ENCODE measurements at regions of chr18 and their contacts with region 1.

Region 1: GRCh38 chr18:59459369-59460079 is 100.5 kb upstream of the LMAN1 start:
- ATAC-seq: peak in 4 of 8 experiments; percentile 39 to 63 (median 44)
- H3K4me3 ChIP-seq: no peak overlapping the region
- H3K27ac ChIP-seq: no peak overlapping the region
- H3K4me1 ChIP-seq: peaks cover 12 to 17% of the 10 kb centered on the region in 2 donors

Region 2: GRCh38 chr18:58429442-58429841 is 1030.1 kb before region 1 on chr18:
- in situ Hi-C with region 1: no loop called
- ATAC-seq: peak in 1 of 8 experiments; percentile 12
- H3K4me3 ChIP-seq: no peak overlapping the region
- H3K27ac ChIP-seq: no peak overlapping the region
- H3K4me1 ChIP-seq: no peaks in the 10 kb centered on the region

Region 3: GRCh38 chr18:59623456-59624368 is 164.2 kb after region 1 on chr18:
- in situ Hi-C with region 1: loop called in 1 of 9 experiments (anchors 25 kb)
- ATAC-seq: peak in 2 of 8 experiments; percentile 25
- H3K4me3 ChIP-seq: no peak overlapping the region
- H3K27ac ChIP-seq: no peak overlapping the region
- H3K4me1 ChIP-seq: no peaks in the 10 kb centered on the region

Region 4: GRCh38 chr18:59814891-59815290 is 355.4 kb after region 1 on chr18:
- in situ Hi-C with region 1: loop called in 8 of 9 experiments (anchors 10 to 25 kb)
- ATAC-seq: peak in 2 of 8 experiments; percentile 32 to 37
- H3K4me3 ChIP-seq: no peak overlapping the region
- H3K27ac ChIP-seq: no peak overlapping the region
- H3K4me1 ChIP-seq: no peaks in the 10 kb centered on the region

Region 5: GRCh38 chr18:59823596-59824195 is 364.2 kb after region 1 on chr18:
- in situ Hi-C with region 1: loop called (anchors 10 to 25 kb)
- ATAC-seq: peak; percentile 62 to 94 (median 84)
- H3K4me3 ChIP-seq: no peak overlapping the region
- H3K27ac ChIP-seq: no peak overlapping the region
- H3K4me1 ChIP-seq: peaks cover 0 to 8% of the 10 kb centered on the region in 2 donors